GM13977 (cell line): ENCODE measurements at regions of chr1 and their contacts with region 1.

Region 1: DNA sequence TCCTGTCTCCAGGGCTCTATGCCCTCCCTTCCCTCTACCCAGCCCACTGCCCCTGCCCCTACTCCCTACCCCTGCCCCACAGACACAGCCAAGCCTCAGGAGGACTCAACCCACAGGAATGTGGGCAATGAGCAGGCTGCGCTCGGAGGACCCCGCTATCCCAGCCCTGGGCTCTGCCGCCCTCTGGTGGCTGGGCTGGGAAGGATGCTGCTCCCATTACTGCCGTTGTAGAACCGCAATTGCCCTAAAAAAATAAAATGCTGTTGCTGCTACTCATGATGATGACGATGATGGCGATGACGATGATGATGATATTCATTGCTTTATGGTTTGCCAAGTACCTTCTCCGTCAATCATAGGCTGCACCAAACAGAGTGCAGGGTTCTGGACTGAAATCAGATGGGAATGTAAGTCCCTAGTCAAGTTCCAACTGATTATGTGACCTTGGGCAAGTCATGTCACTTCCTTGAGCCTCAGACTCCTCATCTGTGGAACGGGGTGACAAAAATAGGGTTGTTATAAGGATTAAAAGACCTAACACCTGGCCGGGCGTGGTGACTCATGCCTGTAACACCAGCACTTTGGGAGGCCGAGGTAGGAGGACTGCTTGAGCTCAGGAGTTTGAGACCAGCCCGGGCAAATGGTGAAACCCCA is 24.6 kb downstream of the ARHGEF19 start:
- DNase-seq: peak; percentile 84
- CTCF ChIP-seq: peak; percentile 95

Region 2: GRCh38 chr1:15799004-15799936 is 388.6 kb before region 1 on chr1:
- in situ Hi-C with region 1: loop called (anchors 25 kb)
- DNase-seq: peak; percentile 36
- CTCF ChIP-seq: no peak

Region 3: DNA sequence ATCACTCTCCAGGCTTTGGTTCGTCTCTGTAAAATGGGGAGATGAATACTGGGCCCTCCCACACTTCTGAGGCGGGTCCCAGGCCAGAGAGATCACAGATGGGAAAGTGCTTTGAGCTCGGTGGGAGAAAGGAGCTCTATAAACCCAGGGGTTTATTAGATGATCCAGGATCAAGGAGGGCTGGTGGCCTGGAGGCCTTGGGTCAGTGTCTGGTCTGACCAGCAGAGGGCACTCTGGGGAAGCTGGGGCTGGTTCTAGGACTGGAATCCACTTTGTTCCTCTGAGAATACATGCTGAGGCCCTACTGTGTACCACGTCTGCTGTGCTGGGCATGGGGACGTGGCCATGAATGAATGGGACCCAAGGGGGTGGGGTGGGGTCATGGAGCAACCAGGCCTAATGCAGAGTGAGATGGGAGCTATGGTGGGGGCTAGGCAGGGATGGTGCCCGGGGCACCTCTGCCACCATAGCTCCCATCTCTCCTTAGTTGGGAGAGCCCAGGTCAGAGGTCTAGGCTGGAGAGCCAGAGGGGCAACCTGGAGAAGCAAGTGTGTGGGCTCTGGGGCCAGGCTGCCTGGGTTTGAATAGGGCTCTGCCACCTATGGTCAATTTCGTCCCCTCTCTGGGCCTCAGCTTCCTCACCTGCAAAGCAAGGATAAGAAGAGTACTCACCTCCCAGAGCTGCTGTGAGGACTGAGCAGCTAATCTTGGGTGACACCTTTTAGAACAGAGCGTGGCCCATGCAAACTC is 105.4 kb before region 1 on chr1:
- in situ Hi-C with region 1: loop called (anchors 5 kb)
- DNase-seq: peak; percentile 85
- CTCF ChIP-seq: peak; percentile 84